ENCODE measurements at regions of chr3 and their contacts with region 1.

Region 1: GRCh38 chr3:71397046-71397445 is 186.5 kb downstream of the FOXP1 start:
- DNase-seq: no peak
- H3K4me3 ChIP-seq: no peak overlapping the region
- H3K27ac ChIP-seq: no peak overlapping the region
- H3K27me3 ChIP-seq: no peaks in the 10 kb centered on the region
- CTCF ChIP-seq: peak; percentile 62

Region 2: DNA sequence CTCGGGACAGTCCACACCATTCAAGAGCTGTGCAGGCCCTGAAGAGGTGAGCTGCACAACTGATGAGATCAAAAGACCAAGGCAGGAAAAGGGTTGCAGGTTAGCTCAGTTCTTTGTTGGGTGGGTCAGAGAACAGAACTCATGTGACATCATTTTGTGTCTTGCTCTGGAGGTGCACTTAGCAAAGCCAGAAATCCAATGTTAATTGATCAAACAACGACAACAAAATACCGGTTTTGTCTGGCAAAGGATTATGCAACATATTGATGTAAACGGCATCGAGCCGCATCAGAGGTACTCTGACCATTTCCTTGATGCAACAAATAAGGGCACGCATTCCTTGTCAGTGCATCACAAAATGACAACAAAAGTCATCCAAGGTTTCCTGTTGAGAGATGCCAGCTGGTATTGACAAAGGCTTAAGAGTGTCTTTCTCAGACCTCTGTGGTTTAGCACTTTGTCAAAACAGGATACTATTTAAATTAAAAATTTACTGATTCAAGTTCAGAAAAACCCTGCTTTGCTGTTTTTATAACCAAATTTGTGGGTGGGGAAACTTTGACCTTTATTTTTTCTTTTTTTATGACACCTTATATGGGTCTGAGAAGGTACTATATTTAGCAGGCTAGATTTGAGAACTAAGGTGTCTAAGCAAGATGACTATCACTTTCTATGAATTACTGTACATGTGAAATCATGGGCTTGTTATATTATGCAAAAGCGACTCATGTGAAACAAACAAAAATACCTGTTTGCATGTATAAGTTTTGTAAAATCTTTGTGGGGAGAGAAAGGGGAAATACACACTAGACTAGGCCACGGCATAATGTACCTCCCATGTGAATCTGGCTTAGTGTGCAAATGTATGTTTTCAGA is 309.7 kb before region 1 on chr3:
- CTCF ChIA-PET with region 1: no interaction called
- POLR2A ChIA-PET with region 1: no interaction called
- DNase-seq: no peak
- H3K4me3 ChIP-seq: no peak overlapping the region
- H3K27ac ChIP-seq: no peak overlapping the region
- H3K27me3 ChIP-seq: no peaks in the 10 kb centered on the region
- CTCF ChIP-seq: no peak

Region 3: GRCh38 chr3:71229905-71230657 is 167.0 kb before region 1 on chr3:
- CTCF ChIA-PET with region 1: no interaction called
- POLR2A ChIA-PET with region 1: no interaction called
- DNase-seq: no peak
- H3K4me3 ChIP-seq: no peak overlapping the region
- H3K27ac ChIP-seq: no peak overlapping the region
- H3K27me3 ChIP-seq: no peaks in the 10 kb centered on the region
- CTCF ChIP-seq: no peak

Region 4: GRCh38 chr3:71407823-71408222 is 10.8 kb after region 1 on chr3:
- CTCF ChIA-PET with region 1: interaction called, 14 read pairs
- POLR2A ChIA-PET with region 1: no interaction called
- DNase-seq: no peak
- H3K4me3 ChIP-seq: no peak overlapping the region
- H3K27ac ChIP-seq: no peak overlapping the region
- H3K27me3 ChIP-seq: no peaks in the 10 kb centered on the region
- CTCF ChIP-seq: no peak

Measured in AG04450 (cell line).